Heart right ventricle (tissue), 16 donors: ENCODE measurements at regions of chr1 and their contacts with region 1.

Region 1: GRCh38 chr1:19485362-19486187 is at the start of gene CAPZB:
- DNase-seq: peak; percentile 96 to 97
- ATAC-seq: peak; percentile 88 to 94 (median 93)
- H3K4me3 ChIP-seq: peak within 1 kb of the TSS; percentile 79 to 100 (median 100)
- H3K27ac ChIP-seq: peak within 1 kb of the TSS; percentile 94 to 100 (median 100)
- H3K4me1 ChIP-seq: peaks cover 29 to 64% (median 60%) of the 10 kb centered on the region in 9 donors
- H3K27me3 ChIP-seq: no peaks in the 10 kb centered on the region
- CTCF ChIP-seq: no peak
- total RNA-seq, gene CAPZB: 207 to 307 (median 228) TPM

Region 2: GRCh38 chr1:19400875-19401534 is 84.6 kb before region 1 on chr1:
- intact Hi-C with region 1: loop called in 1 of 10 experiments (anchors 5 kb)
- DNase-seq: no peak
- ATAC-seq: no peak
- H3K4me3 ChIP-seq: no peak overlapping the region
- H3K27ac ChIP-seq: peak overlapping the region in 5 of 10 donors; percentile 28 to 65 (median 48)
- H3K4me1 ChIP-seq: peaks cover 24 to 90% (median 59%) of the 10 kb centered on the region in 9 donors
- H3K27me3 ChIP-seq: no peaks in the 10 kb centered on the region
- CTCF ChIP-seq: no peak

Region 3: DNA sequence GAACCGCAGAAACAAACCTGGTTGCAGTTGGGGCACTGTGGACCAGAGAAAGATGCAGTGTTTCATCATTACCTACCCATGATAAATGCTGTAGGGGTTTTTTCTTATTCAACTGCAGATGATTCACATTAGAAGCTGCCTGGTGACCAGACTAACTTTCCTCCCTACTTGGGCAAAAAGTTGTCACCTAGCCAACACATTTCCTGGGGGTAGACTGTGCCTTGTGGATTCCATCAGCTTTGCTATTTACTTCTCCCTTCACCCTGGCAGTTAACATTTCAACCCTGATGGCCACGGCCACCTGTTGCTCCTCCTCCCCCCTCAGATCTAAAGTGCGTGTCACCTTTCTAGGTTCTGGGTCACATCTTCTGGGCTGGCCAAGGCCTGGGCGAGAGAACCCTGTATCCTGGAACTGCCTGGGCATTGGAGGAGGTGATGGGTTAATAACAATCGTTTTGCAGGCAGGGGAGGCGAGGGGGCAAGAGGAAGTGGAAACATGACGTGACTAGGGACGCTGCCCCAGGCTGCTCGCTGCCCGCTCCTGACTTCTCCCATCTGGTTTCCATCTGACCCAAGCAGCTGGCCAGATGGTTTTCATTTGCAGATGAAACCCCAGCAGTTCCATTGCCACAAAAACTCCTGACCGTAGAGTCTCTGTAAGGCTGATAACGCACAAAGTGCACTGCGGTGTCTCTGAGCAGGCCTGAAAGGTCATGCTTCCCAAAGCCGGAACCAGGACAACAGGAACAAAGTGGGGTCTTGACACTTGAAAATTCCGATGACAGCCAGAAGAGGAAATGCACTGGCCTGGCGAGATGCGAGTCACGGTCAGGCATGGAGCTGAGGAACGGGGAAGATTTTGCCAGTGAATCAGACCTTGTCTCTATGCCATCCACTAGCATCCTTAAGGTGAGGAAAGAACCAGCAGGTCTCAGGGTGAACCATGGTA is 36.8 kb before region 1 on chr1:
- intact Hi-C with region 1: loop called in 1 of 10 experiments (anchors 5 kb)
- DNase-seq: peak; percentile 68 to 73
- ATAC-seq: peak; percentile 39 to 70 (median 62)
- H3K4me3 ChIP-seq: peak overlapping the region in 2 of 10 donors; percentile 5 to 14
- H3K27ac ChIP-seq: peak overlapping the region; percentile 45 to 90 (median 65)
- H3K4me1 ChIP-seq: peaks cover 43 to 97% (median 94%) of the 10 kb centered on the region in 9 donors
- H3K27me3 ChIP-seq: no peaks in the 10 kb centered on the region
- CTCF ChIP-seq: no peak

Region 4: GRCh38 chr1:19596714-19597495 is 111.3 kb after region 1 on chr1:
- intact Hi-C with region 1: loop called in 4 of 10 experiments (anchors 2 to 10 kb)
- DNase-seq: peak; percentile 94 to 98
- ATAC-seq: peak; percentile 94 to 97 (median 96)
- H3K4me3 ChIP-seq: peak overlapping the region; percentile 53 to 98 (median 87)
- H3K27ac ChIP-seq: peak overlapping the region; percentile 71 to 99 (median 97)
- H3K4me1 ChIP-seq: peaks cover 0 to 51% (median 41%) of the 10 kb centered on the region in 9 donors
- H3K27me3 ChIP-seq: no peaks in the 10 kb centered on the region
- CTCF ChIP-seq: no peak

Region 5: GRCh38 chr1:19651141-19651737 is 165.7 kb after region 1 on chr1:
- intact Hi-C with region 1: loop called (anchors 5 to 10 kb)
- DNase-seq: peak; percentile 66 to 70
- ATAC-seq: peak; percentile 76 to 87 (median 83)
- H3K4me3 ChIP-seq: peak overlapping the region in 4 of 10 donors; percentile 16 to 23 (median 18)
- H3K27ac ChIP-seq: peak overlapping the region; percentile 24 to 95 (median 80)
- H3K4me1 ChIP-seq: peaks cover 25 to 100% (median 65%) of the 10 kb centered on the region in 9 donors
- H3K27me3 ChIP-seq: peaks cover 0 to 8% (median 0%) of the 10 kb centered on the region in 7 donors
- CTCF ChIP-seq: peak; percentile 54 to 84 (median 77)